ENCODE measurements at regions of chr6 and their contacts with region 1.

Region 1: GRCh38 chr6:103139377-103139776 is 1720.3 kb downstream of the HACE1 start:
- DNase-seq: no peak
- H3K4me3 Mint-ChIP-seq: no peak overlapping the region
- H3K27ac Mint-ChIP-seq: no peak overlapping the region
- H3K4me1 Mint-ChIP-seq: no peaks in the 10 kb centered on the region
- H3K27me3 Mint-ChIP-seq: no peaks in the 10 kb centered on the region
- CTCF ChIP-seq: no peak

Region 2: GRCh38 chr6:103153016-103153415 is 13.6 kb after region 1 on chr6:
- CTCF ChIA-PET with region 1: no interaction called
- intact Hi-C with region 1: no loop called
- DNase-seq: no peak
- H3K4me3 Mint-ChIP-seq: no peak overlapping the region
- H3K27ac Mint-ChIP-seq: no peak overlapping the region
- H3K4me1 Mint-ChIP-seq: no peaks in the 10 kb centered on the region
- H3K27me3 Mint-ChIP-seq: no peaks in the 10 kb centered on the region
- CTCF ChIP-seq: no peak

Region 3: DNA sequence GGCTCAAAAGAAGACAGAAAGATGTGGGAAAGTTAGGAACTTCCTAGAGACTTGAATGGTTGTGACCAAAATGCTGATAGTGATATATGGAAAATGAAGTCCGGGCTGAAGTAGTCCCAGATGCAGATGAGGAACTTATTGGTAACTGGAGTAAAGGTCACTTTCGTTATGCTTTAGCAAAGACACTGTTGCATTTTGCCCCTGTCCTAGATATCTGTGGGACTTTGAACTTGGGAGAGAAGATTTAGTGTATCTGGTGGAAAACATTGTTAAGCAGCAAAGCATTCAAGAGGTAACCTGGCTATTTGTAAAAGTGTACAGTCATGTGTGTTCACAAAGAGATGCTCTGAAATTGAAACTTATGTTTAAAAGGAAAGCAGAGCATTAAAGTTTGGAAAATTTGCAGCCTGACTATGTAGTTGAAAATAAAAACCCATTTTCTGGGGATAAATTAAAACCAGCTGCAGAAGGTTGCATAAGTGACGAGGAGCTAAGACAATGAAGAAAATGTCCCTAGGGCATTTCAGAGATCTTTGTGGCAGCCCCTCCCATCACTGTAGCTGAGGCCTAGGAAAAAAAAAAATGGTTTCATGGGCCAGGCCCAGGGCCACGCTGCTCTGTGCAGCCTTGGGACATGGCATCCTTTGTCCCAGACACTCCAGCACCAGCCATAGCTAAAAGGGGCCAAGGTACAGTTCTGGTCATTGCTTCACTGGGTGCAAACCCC is 28.1 kb after region 1 on chr6:
- CTCF ChIA-PET with region 1: no interaction called
- intact Hi-C with region 1: no loop called
- DNase-seq: no peak
- H3K4me3 Mint-ChIP-seq: no peak overlapping the region
- H3K27ac Mint-ChIP-seq: no peak overlapping the region
- H3K4me1 Mint-ChIP-seq: no peaks in the 10 kb centered on the region
- H3K27me3 Mint-ChIP-seq: no peaks in the 10 kb centered on the region
- CTCF ChIP-seq: no peak

Region 4: DNA sequence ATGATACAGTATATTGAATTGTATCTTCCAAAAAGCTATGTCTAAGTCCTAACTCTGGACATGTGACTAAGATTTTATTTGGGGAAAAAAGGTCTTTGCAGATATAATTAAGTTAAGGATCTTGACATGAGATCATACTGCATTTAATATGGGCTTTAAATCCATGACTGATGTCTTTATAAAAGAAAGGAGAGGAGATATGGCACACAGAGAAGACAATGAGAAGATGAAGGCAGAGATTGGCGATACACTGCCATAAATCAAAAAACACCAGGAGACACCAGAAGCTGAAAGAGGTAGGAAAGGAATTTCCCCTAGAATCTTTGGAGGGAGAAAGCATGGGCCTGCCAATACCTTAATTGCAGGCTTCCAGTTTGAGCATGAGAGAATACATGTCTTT is 270.1 kb after region 1 on chr6:
- CTCF ChIA-PET with region 1: no interaction called
- intact Hi-C with region 1: no loop called
- DNase-seq: no peak
- H3K4me3 Mint-ChIP-seq: no peak overlapping the region
- H3K27ac Mint-ChIP-seq: no peak overlapping the region
- H3K4me1 Mint-ChIP-seq: no peaks in the 10 kb centered on the region
- H3K27me3 Mint-ChIP-seq: no peaks in the 10 kb centered on the region
- CTCF ChIP-seq: no peak

Region 5: DNA sequence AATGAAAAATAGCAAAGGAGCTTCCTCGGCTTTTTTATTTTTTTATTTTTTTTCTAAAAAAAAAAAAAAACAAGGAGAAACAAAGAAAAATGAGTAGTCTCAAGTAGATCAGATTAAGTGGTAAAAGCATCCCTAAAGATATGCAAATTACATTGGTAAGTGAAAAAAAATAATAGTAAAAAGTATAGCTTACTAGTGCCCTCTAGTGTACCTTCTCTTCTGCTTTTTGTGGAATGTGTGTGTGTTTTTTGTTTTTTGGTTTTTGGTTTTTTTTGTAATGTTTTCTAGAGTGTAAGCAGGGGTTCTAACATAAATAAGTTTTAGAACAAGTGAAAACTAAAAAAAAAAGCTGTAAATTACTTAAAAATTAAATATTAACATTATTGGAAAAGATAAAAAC is 658.4 kb after region 1 on chr6:
- CTCF ChIA-PET with region 1: no interaction called
- intact Hi-C with region 1: loop called (anchors 10 kb)
- DNase-seq: no peak
- H3K4me3 Mint-ChIP-seq: no peak overlapping the region
- H3K27ac Mint-ChIP-seq: no peak overlapping the region
- H3K4me1 Mint-ChIP-seq: no peaks in the 10 kb centered on the region
- H3K27me3 Mint-ChIP-seq: no peaks in the 10 kb centered on the region
- CTCF ChIP-seq: peak; percentile 32